ENCODE measurements at regions of chr17 and their contacts with region 1.

Region 1: GRCh38 chr17:72120642-72121163 is at the start of gene SOX9:
- DNase-seq: peak; percentile 87 to 97 (median 96)
- ATAC-seq: peak; percentile 82 to 88 (median 86)
- H3K4me3 ChIP-seq: peak within 1 kb of the TSS; percentile 40 to 92 (median 68)
- H3K27ac ChIP-seq: peak within 1 kb of the TSS; percentile 83 to 95 (median 90)
- H3K4me1 ChIP-seq: peaks cover 0 to 17% (median 9%) of the 10 kb centered on the region in 3 donors
- H3K27me3 ChIP-seq: no peaks in the 10 kb centered on the region
- CTCF ChIP-seq: no peak
- total RNA-seq, gene SOX9: 22.7 to 76.1 (median 34.2) TPM

Region 2: DNA sequence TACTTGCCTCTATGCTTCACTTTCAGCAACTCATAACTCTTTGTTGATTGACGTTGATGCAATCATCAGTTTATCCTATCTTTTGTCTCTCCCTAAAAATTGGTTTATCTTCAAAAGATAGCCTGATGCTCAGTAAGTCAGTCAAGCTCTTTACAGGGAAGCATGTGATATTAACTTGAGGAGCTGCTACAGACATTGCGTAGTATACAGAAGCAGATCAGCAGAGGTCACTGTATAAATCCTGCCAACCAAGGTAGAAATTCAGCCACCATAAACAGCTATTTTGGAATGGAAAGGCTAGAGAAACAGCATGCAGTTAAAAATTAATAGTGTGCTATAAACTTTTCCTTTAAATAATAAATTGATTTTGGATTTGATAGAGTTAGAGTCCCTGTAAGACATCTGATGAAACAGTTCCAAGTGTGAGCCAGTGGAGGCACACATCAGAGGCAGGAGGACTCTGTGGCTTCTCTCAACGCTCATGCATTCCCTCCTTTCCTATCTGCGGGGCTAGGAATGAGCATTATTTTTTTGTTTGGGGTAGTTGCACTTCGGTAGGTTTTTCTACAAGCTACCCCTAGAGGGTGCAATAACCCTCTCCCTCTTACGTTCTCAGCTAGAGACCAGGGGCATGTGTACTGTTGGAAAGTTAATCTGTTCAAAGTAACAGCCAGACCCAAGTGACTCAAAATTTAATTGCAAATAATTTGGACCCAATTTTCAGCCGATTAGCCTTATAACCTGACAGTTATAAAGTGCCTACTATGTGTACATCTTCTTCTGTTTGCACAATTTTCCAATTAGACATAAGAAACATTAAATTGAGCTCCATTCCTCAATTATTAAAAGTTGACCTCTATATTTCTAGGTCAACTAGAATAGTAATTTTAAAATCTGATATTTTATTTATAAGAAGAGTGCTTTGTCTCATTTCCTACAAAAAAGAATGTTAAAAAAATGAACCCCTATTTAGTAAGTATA is 647.6 kb before region 1 on chr17:
- intact Hi-C with region 1: loop called in 2 of 3 experiments (anchors 10 kb)
- DNase-seq: peak in 3 of 6 donors; percentile 12 to 42 (median 17)
- ATAC-seq: peak; percentile 68 to 98 (median 94)
- H3K4me3 ChIP-seq: no peak overlapping the region
- H3K27ac ChIP-seq: no peak overlapping the region
- H3K4me1 ChIP-seq: no peaks in the 10 kb centered on the region
- H3K27me3 ChIP-seq: no peaks in the 10 kb centered on the region
- CTCF ChIP-seq: peak; percentile 28 to 60 (median 54)

Region 3: GRCh38 chr17:71959154-71959553 is 161.5 kb before region 1 on chr17:
- intact Hi-C with region 1: loop called in 1 of 3 experiments (anchors 10 kb)
- DNase-seq: no peak
- ATAC-seq: peak in 1 of 4 donors; percentile 41
- H3K4me3 ChIP-seq: no peak overlapping the region
- H3K27ac ChIP-seq: no peak overlapping the region
- H3K4me1 ChIP-seq: no peaks in the 10 kb centered on the region
- H3K27me3 ChIP-seq: no peaks in the 10 kb centered on the region
- CTCF ChIP-seq: peak in 2 of 4 donors; percentile 20 to 25

Region 4: DNA sequence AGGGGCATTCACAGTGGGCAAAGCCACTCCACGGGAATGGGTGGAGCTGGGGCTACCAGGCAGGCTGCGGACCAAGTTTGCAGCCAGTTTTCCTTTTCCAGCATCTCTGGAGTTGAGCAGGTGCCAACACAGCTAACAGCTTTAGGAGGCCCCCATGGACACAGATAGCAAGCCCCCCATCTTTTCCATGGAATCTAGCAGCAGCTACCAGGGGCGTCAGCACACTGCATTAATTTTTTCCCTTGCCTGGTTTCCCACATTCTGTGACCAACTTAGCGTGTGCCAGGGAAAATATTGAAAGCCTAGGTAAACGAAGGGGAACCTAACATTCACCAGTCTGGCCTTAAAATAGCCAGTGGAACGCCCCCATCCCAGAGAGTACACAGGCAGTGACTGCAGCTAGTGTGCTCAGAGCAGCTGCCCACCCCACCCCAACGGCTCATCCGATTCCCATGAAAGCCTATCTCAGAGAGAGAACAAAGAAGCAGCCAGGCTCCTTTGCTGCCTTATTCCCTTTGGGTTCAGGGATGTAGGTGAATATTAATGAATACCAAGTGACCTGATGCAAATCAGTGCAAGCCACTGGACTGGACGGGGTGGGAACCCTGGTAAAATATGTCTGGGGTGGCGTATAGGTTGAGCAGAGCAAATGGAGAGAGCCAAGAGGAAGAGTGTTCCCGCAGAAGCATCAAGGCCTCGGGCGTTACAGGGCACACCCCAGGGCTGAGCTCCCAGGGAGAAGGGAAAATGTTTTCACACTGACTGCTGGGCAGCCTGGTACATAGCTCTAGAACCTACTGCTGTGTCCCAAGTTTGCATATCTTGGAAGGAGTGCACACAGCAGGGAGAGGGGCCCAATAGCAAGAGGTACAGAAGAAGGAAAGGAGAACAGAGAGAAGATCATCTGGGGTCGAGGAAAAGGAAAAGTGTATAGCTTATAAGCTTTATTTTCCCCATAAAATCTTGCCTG is 73.8 kb before region 1 on chr17:
- intact Hi-C with region 1: loop called in 1 of 3 experiments (anchors 10 kb)
- DNase-seq: no peak
- ATAC-seq: no peak
- H3K4me3 ChIP-seq: no peak overlapping the region
- H3K27ac ChIP-seq: no peak overlapping the region
- H3K4me1 ChIP-seq: no peaks in the 10 kb centered on the region
- H3K27me3 ChIP-seq: no peaks in the 10 kb centered on the region
- CTCF ChIP-seq: no peak

Region 5: GRCh38 chr17:72421128-72422092 is 300.7 kb after region 1 on chr17:
- intact Hi-C with region 1: loop called in 1 of 3 experiments (anchors 10 kb)
- DNase-seq: peak in 5 of 6 donors; percentile 73 to 89 (median 86)
- ATAC-seq: peak; percentile 89 to 93 (median 92)
- H3K4me3 ChIP-seq: no peak overlapping the region
- H3K27ac ChIP-seq: peak overlapping the region; percentile 60 to 91 (median 76)
- H3K4me1 ChIP-seq: peaks cover 17 to 41% (median 19%) of the 10 kb centered on the region in 3 donors
- H3K27me3 ChIP-seq: no peaks in the 10 kb centered on the region
- CTCF ChIP-seq: no peak

Region 6: GRCh38 chr17:72539981-72540897 is 419.5 kb after region 1 on chr17:
- intact Hi-C with region 1: loop called in 2 of 3 experiments (anchors 10 kb)
- DNase-seq: peak; percentile 54 to 97 (median 86)
- ATAC-seq: peak; percentile 96 to 99 (median 98)
- H3K4me3 ChIP-seq: peak overlapping the region in 2 of 4 donors; percentile 8 to 16
- H3K27ac ChIP-seq: peak overlapping the region; percentile 45 to 67 (median 54)
- H3K4me1 ChIP-seq: peaks cover 0 to 9% (median 0%) of the 10 kb centered on the region in 3 donors
- H3K27me3 ChIP-seq: no peaks in the 10 kb centered on the region
- CTCF ChIP-seq: peak; percentile 83 to 88 (median 84)